CD4-positive, alpha-beta T cell (primary cell): ENCODE measurements at regions of chr9 and their contacts with region 1.

Region 1: GRCh38 chr9:259405-260404 is 45.0 kb downstream of the DOCK8 start:
- DNase-seq: no peak
- ATAC-seq: no peak
- H3K4me3 ChIP-seq: no peak overlapping the region
- H3K4me3 Mint-ChIP-seq: no peak overlapping the region
- H3K27ac ChIP-seq: no peak overlapping the region
- H3K27ac Mint-ChIP-seq: no peak overlapping the region
- H3K4me1 ChIP-seq: no peaks in the 10 kb centered on the region
- H3K4me1 Mint-ChIP-seq: peaks cover 10% of the 10 kb centered on the region
- H3K27me3 ChIP-seq: no peaks in the 10 kb centered on the region
- H3K27me3 Mint-ChIP-seq: peaks cover 8% of the 10 kb centered on the region
- CTCF ChIP-seq: no peak

Region 2: GRCh38 chr9:224582-225520 is 34.9 kb before region 1 on chr9:
- CTCF ChIA-PET with region 1: no interaction called
- POLR2A ChIA-PET with region 1: no interaction called
- intact Hi-C with region 1: loop called in 1 of 2 experiments (anchors 5 kb)
- DNase-seq: no peak
- ATAC-seq: no peak
- H3K4me3 ChIP-seq: no peak overlapping the region
- H3K4me3 Mint-ChIP-seq: no peak overlapping the region
- H3K27ac ChIP-seq: no peak overlapping the region
- H3K27ac Mint-ChIP-seq: no peak overlapping the region
- H3K4me1 ChIP-seq: peaks cover 7% of the 10 kb centered on the region
- H3K4me1 Mint-ChIP-seq: peaks cover 8% of the 10 kb centered on the region
- H3K27me3 ChIP-seq: no peaks in the 10 kb centered on the region
- H3K27me3 Mint-ChIP-seq: peaks cover 6% of the 10 kb centered on the region
- CTCF ChIP-seq: no peak

Region 3: DNA sequence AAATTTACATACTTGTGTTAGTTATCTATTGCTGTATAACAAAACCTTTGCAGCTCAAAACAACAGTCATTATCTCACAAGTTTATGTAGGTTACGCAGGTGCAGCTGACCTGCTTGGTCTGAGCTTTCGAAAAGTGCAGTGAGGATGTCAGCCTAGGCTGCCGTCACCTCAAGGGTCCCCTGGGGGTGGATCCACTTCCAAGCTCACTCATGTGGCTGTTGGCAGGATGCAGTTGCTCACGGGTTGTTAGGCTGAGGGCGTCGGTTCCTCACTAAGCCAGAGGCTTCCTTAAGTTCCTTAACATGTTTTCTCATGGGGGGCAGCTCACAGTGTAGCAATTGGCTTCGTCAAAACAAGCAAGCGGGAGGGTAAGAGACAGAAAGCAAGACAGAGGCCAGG is 94.7 kb after region 1 on chr9:
- CTCF ChIA-PET with region 1: no interaction called
- POLR2A ChIA-PET with region 1: no interaction called
- intact Hi-C with region 1: no loop called
- DNase-seq: no peak
- ATAC-seq: no peak
- H3K4me3 ChIP-seq: no peak overlapping the region
- H3K4me3 Mint-ChIP-seq: no peak overlapping the region
- H3K27ac ChIP-seq: no peak overlapping the region
- H3K27ac Mint-ChIP-seq: no peak overlapping the region
- H3K4me1 ChIP-seq: peaks cover 13% of the 10 kb centered on the region
- H3K4me1 Mint-ChIP-seq: peaks cover 41% of the 10 kb centered on the region
- H3K27me3 ChIP-seq: no peaks in the 10 kb centered on the region
- H3K27me3 Mint-ChIP-seq: no peaks in the 10 kb centered on the region
- CTCF ChIP-seq: no peak